Activated CD4-positive, alpha-beta T cell treated with anti-CD3 and anti-CD28 coated beads for 36 hours (primary cell): ENCODE measurements at regions of chr19 and their contacts with region 1.

Region 1: DNA sequence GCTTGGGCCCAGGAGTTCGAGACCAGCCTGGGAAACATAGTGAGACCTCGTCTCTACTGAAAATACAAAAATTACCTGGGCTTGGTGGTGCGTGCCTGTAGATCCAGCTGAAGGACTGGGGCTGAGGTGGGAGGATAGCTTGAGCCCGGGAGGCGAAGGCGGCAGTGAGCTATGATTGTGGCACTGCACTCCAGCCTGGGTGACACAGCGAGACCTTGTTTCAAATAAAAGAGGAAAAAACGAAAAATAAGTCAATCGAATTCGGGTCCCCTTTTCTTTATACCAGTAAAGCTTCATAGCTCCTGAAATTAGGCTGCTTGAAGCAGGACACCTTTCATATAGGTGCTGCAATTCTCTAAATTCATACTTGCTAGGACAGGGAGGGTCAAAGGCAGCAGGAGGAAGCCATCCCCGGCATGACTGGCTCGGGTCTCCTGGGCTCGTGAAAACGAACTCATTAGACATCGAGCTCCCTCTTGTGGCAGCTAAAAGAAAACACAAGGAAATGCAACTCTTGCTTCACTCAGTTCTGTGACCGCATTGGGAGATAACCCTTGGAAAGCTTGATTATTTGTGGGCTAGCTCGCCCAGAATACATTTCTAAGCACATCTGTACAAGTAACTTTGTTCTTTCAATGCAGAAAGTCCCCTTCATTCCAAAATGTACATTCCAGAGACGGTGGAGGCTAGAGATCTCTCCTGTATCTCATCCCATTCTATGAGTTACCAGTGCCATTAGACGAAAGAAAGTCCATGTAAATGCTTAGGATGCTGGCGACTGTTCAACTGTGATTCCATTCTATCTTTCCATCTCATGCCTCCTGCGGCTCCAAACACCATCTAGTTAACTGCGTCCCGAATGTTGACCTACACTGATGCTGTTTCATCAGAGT is 16.8 kb downstream of the FPR2 start:
- DNase-seq: peak; percentile 66
- ATAC-seq: peak; percentile 74
- H3K4me3 Mint-ChIP-seq: no peak overlapping the region
- H3K27ac Mint-ChIP-seq: no peak overlapping the region
- H3K4me1 Mint-ChIP-seq: peaks cover 6% of the 10 kb centered on the region
- H3K27me3 Mint-ChIP-seq: peaks cover 57% of the 10 kb centered on the region

Region 2: DNA sequence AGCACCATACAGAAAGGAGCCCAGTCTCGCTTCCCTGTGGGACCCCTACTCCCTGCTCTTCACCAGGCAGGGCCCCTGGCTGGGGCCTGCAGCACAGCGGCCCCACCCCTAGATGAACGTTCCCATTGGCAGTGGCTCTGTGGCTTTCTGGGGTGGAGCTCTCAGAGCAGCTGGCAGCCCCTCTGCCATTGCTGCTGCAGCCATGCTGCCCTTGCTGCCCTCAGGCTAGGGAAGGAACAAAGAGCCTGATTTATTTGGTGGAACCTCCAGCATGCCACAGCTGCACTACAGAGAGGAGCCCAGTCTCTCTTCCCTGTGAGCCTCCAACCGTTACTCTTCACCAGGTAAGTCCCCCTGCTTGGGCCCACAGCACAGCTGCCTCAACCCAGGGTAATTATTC is 252.1 kb before region 1 on chr19:
- CTCF ChIA-PET with region 1: no interaction called
- POLR2A ChIA-PET with region 1: no interaction called
- intact Hi-C with region 1: no loop called
- DNase-seq: no peak
- ATAC-seq: no peak
- H3K4me3 Mint-ChIP-seq: no peak overlapping the region
- H3K27ac Mint-ChIP-seq: no peak overlapping the region
- H3K4me1 Mint-ChIP-seq: peaks cover 4% of the 10 kb centered on the region
- H3K27me3 Mint-ChIP-seq: peaks cover 22% of the 10 kb centered on the region

Region 3: DNA sequence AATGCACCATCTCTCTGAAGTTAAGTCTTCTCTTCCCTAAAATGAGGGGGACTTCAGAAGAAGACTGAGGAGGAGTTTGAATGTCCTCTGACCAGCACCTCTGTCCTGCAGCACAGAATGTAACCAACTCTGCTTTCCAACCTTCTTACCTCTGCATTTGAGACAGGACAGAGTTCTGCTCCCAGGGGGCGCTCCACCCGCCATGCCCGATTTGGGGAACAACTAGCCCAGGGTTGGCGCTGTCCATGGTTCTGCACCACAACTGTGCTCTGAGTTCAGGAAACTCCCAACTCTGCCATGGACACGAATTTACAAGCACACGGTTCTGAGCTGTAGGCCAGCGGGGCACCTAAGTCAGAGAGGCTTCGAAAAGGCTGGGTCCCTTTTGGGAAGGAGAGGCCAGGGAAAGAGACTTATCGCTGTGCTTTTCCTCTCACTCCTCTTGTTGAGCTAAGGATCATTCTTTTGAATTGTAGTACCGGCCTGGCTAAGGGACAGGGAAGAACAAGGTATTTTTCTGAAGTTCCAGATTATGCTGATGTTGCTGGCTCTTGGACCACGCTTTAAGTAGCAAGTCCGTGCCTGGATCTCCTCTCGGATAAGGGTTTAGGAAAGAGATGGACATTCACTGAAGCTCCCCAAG is 169.8 kb before region 1 on chr19:
- CTCF ChIA-PET with region 1: interaction called, 3 read pairs
- POLR2A ChIA-PET with region 1: no interaction called
- intact Hi-C with region 1: loop called in 1 of 2 experiments (anchors 5 kb)
- DNase-seq: peak; percentile 88
- ATAC-seq: peak; percentile 37
- H3K4me3 Mint-ChIP-seq: no peak overlapping the region
- H3K27ac Mint-ChIP-seq: no peak overlapping the region
- H3K4me1 Mint-ChIP-seq: peaks cover 21% of the 10 kb centered on the region
- H3K27me3 Mint-ChIP-seq: peaks cover 36% of the 10 kb centered on the region

Region 4: GRCh38 chr19:51712460-51713083 is 65.2 kb before region 1 on chr19:
- CTCF ChIA-PET with region 1: interaction called, 4 read pairs
- POLR2A ChIA-PET with region 1: no interaction called
- intact Hi-C with region 1: loop called (anchors 2 to 5 kb)
- DNase-seq: peak; percentile 44
- ATAC-seq: no peak
- H3K4me3 Mint-ChIP-seq: no peak overlapping the region
- H3K27ac Mint-ChIP-seq: no peak overlapping the region
- H3K4me1 Mint-ChIP-seq: no peaks in the 10 kb centered on the region
- H3K27me3 Mint-ChIP-seq: peaks cover 6% of the 10 kb centered on the region

Region 5: GRCh38 chr19:51751655-51752054 is 26.2 kb before region 1 on chr19 and contains the start of gene FPR1:
- CTCF ChIA-PET with region 1: no interaction called
- POLR2A ChIA-PET with region 1: no interaction called
- intact Hi-C with region 1: no loop called
- DNase-seq: no peak
- ATAC-seq: no peak
- H3K4me3 Mint-ChIP-seq: no peak within 1 kb of the TSS
- H3K27ac Mint-ChIP-seq: no peak within 1 kb of the TSS
- H3K4me1 Mint-ChIP-seq: no peaks in the 10 kb centered on the region
- H3K27me3 Mint-ChIP-seq: peaks cover 5% of the 10 kb centered on the region
- total RNA-seq, gene FPR1: not detected

Region 6: DNA sequence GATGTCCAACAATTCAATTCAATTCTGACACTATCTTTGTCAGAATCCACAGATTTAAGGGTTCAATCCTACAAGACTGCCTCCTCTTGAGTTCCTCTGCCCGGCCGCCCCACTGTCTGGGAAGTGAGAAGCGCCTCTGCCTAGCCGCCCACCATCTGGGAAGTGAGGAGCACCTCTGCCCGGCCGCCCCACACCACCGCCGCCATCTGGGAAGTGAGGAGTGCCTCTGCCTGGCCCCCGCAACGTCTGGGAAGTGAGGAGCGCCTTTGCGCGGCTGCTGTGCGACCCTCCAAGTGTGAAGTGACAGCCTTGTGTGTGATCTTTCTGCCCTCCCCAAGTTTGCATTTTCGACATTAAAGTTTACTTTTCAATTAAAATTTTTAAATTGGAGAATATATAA is 244.4 kb after region 1 on chr19:
- CTCF ChIA-PET with region 1: no interaction called
- POLR2A ChIA-PET with region 1: no interaction called
- intact Hi-C with region 1: no loop called
- DNase-seq: no peak
- ATAC-seq: no peak
- H3K4me3 Mint-ChIP-seq: no peak overlapping the region
- H3K27ac Mint-ChIP-seq: no peak overlapping the region
- H3K4me1 Mint-ChIP-seq: peaks cover 8% of the 10 kb centered on the region
- H3K27me3 Mint-ChIP-seq: no peaks in the 10 kb centered on the region